AG04450 (cell line): ENCODE measurements at regions of chr19 and their contacts with region 1.

Region 1: GRCh38 chr19:32976208-32976805 is 4.3 kb downstream of the FAAP24 start:
- DNase-seq: no peak
- H3K4me3 ChIP-seq: no peak overlapping the region
- H3K27ac ChIP-seq: no peak overlapping the region
- H3K27me3 ChIP-seq: no peaks in the 10 kb centered on the region
- CTCF ChIP-seq: peak; percentile 90

Region 2: GRCh38 chr19:33104520-33104919 is 128.2 kb after region 1 on chr19:
- CTCF ChIA-PET with region 1: interaction called, 16 read pairs
- POLR2A ChIA-PET with region 1: no interaction called
- DNase-seq: no peak
- H3K4me3 ChIP-seq: no peak overlapping the region
- H3K27ac ChIP-seq: no peak overlapping the region
- H3K27me3 ChIP-seq: no peaks in the 10 kb centered on the region
- CTCF ChIP-seq: no peak

Region 3: DNA sequence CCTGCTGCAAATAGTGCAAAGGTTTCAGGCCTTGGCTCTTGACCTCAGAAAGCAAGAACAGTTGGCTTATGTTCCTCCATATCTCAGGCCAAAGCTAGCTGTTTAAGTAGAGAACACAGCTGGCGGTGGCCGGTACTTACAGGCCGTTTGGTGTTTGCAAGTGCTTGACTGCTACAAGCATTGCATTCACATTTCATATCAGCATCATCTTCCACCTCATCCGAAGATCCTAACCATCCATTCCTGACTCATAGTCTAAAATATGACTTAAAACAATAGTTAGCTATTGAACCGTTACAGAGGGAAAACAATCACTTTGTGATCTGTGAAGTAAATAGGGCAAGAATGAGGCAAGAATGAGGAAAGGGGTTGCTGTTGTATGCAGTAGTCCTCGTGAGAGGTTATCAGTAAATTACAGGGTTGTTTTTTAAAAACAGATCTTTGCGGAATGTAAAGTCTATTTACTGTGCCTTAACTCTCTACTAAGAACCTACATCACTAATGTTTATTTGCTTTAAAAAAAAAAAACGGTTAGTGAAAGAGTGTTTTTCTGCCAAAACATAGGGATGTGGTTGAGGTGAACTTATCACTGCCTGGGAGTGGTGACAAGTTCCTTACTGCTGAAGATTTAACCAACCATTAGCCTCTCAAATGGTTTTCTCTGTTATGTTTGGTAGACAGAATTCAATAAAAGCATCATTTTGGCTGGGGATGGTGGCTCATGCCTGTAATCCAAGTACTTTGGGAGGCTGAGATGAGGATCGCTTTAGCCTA is 134.0 kb after region 1 on chr19:
- CTCF ChIA-PET with region 1: interaction called, 19 read pairs
- POLR2A ChIA-PET with region 1: no interaction called
- DNase-seq: peak; percentile 44
- H3K4me3 ChIP-seq: no peak overlapping the region
- H3K27ac ChIP-seq: peak overlapping the region; percentile 78
- H3K27me3 ChIP-seq: no peaks in the 10 kb centered on the region
- CTCF ChIP-seq: no peak

Region 4: DNA sequence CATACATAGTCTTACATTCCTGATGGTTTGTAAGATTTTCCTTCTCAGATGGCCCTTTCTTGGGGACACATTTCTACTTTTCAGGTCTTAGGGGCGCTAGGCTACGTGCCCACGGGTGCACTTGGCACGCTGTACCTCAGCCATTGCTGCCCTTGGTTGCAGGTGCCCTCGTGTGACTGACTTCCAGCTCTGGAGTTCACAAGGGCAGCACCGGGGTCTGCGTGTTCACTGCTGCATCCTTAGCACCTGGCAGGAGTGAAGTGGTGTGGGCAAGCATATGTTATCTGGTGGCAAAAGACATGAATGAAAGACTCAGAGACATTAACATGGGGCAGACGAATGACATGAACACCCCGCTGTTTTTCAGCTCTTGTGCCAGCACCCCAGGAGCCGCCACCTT is 142.3 kb after region 1 on chr19:
- CTCF ChIA-PET with region 1: interaction called, 47 read pairs
- POLR2A ChIA-PET with region 1: interaction called, 3 read pairs
- DNase-seq: no peak
- H3K4me3 ChIP-seq: no peak overlapping the region
- H3K27ac ChIP-seq: no peak overlapping the region
- H3K27me3 ChIP-seq: no peaks in the 10 kb centered on the region
- CTCF ChIP-seq: no peak

Region 5: GRCh38 chr19:33125929-33126388 is 149.7 kb after region 1 on chr19:
- CTCF ChIA-PET with region 1: interaction called, 24 read pairs
- POLR2A ChIA-PET with region 1: no interaction called
- DNase-seq: peak; percentile 42
- H3K4me3 ChIP-seq: no peak overlapping the region
- H3K27ac ChIP-seq: no peak overlapping the region
- H3K27me3 ChIP-seq: no peaks in the 10 kb centered on the region
- CTCF ChIP-seq: peak; percentile 90